Activated T-helper 1 cell treated with anti-CD3 and anti-CD28 coated beads, Interleukin-12 subunit alpha, Interleukin-12 subunit beta, Interleukin-2, Interleukin-4 antibody, amounts not matched to agents 30 ng/mL and 10 ng/mL and 1 ng/mL, durations not matched to agents 14 hours and 24 hours and 36 hours (primary cell): ENCODE measurements at regions of chr9 and their contacts with region 1.

Region 1: GRCh38 chr9:135907431-135908092 is at the start of gene CAMSAP1:
- DNase-seq: peak; percentile 91
- H3K4me3 Mint-ChIP-seq: peak within 1 kb of the TSS; percentile 90
- H3K27ac Mint-ChIP-seq: peak within 1 kb of the TSS; percentile 89
- H3K4me1 Mint-ChIP-seq: peaks cover 50% of the 10 kb centered on the region
- H3K27me3 Mint-ChIP-seq: no peaks in the 10 kb centered on the region
- total RNA-seq, gene CAMSAP1: 43.3 and 43.8 TPM in 2 replicates

Region 2: GRCh38 chr9:135440620-135441019 is 466.9 kb before region 1 on chr9:
- intact Hi-C with region 1: no loop called
- DNase-seq: no peak
- H3K4me3 Mint-ChIP-seq: no peak overlapping the region
- H3K27ac Mint-ChIP-seq: no peak overlapping the region
- H3K4me1 Mint-ChIP-seq: peaks cover 7% of the 10 kb centered on the region
- H3K27me3 Mint-ChIP-seq: peaks cover 5% of the 10 kb centered on the region

Region 3: DNA sequence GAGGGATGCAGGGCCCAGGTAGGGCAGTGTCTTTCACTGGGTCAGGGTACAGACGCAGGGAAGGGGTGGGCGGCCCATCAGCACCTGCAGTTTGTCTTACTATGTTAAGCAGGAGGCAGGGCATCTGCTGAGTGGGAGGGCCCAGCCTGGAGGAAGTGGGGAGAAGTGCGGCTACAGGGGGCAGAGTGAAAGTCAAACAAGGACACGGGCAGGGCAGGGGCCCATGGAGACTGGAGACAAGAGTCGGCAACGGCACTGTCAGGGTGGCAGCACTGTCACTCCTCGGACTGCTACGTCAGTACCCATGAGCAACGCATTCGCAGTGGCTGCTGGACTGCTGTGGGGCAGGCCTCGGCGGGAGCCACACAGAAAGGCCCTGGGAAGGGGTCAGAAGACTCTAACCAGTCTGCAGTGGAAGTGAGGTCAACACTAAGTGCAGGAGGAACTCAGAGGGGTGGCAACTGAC is 19.9 kb before region 1 on chr9:
- intact Hi-C with region 1: loop called (anchors 1 kb)
- DNase-seq: peak; percentile 40
- H3K4me3 Mint-ChIP-seq: peak overlapping the region; percentile 50
- H3K27ac Mint-ChIP-seq: peak overlapping the region; percentile 65
- H3K4me1 Mint-ChIP-seq: peaks cover 47% of the 10 kb centered on the region
- H3K27me3 Mint-ChIP-seq: peaks cover 3% of the 10 kb centered on the region

Region 4: DNA sequence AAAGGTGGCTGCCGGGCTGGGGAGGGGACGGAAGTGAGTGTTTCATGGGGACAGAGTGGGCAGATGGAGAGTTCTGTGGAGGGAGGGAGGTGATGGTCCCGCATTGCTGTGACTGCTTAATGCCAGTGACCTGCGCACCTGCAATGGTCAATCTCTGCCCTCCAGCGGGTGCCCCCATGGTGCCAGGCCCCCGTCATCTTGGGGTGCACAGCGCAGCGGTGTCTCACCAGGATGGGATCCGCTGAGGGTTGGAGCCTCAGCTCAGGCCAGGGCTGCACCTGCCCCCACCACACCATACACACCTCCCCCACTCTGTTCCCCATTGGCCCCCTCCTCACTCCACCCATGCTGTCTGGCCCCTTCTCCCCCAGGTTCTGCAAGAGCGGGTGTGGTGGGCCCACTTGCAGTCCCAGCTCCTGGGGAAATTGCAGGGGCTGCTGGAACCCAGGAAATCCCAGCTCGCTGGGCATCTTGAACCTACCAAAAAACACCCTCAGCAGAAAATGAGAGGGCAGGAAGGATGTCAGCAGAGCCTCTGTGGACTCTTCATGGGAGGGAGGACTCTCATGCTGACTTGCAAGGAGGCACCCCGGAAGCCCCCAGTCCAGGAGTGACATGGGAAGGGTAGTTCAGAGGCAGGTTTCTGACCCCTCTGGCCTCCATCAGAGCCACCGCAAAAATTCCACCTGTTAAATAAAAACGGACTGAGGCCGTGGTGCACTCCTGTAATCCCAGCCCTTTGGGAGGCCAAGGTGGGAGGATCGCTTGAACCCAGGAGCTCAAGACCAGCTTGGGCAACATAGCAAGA is 12.0 kb after region 1 on chr9:
- intact Hi-C with region 1: no loop called
- DNase-seq: no peak
- H3K4me3 Mint-ChIP-seq: no peak overlapping the region
- H3K27ac Mint-ChIP-seq: peak overlapping the region; percentile 35
- H3K4me1 Mint-ChIP-seq: peaks cover 6% of the 10 kb centered on the region
- H3K27me3 Mint-ChIP-seq: no peaks in the 10 kb centered on the region

Region 5: GRCh38 chr9:135961277-135961705 is 53.7 kb after region 1 on chr9 and contains the start of gene UBAC1:
- intact Hi-C with region 1: loop called (anchors 1 kb)
- DNase-seq: peak; percentile 93
- H3K4me3 Mint-ChIP-seq: peak within 1 kb of the TSS; percentile 87
- H3K27ac Mint-ChIP-seq: peak within 1 kb of the TSS; percentile 82
- H3K4me1 Mint-ChIP-seq: peaks cover 25% of the 10 kb centered on the region
- H3K27me3 Mint-ChIP-seq: peaks cover 8% of the 10 kb centered on the region
- total RNA-seq, gene UBAC1: 41.9 and 42.0 TPM in 2 replicates

Region 6: DNA sequence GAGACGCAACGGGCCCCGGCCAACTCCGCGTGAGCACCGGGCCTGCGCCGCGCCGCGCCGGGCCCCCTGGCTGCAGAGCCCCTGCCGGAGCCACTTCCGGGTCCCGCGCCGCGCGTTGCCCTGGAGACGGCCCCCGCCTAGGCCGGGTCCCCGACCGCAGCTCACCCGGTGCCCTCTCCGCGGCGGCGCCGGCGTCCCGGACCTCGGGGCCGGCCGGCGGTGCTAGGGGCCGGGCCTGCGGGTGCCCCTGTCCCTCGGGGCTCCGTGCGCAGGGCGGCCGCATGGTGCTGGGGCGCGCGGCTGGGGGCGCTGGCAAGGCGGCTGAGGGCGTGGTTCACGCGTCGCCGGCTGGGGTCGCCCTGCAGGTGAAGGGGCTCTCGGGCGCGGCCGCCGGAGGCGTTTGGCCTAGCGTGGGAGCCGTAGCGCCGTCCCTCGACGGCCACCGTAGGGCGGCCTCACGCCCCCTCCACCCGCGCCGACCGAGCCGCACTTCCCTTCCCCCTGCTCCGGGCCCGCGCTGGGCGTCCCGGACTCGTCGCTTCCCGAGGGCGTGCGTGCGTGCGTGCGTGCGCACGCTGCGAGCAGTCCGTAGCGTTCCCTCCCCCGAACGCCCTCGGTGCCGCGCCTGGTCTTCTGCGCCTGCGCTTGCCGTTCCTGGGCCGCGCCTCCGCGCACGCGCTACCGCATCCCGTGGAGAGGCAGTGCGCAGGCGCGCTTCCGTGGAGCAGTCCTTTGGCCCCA is 210.9 kb after region 1 on chr9 and contains the start of gene TMEM250:
- intact Hi-C with region 1: loop called (anchors 2 kb)
- DNase-seq: peak; percentile 96
- H3K4me3 Mint-ChIP-seq: peak within 1 kb of the TSS; percentile 82
- H3K27ac Mint-ChIP-seq: peak within 1 kb of the TSS; percentile 76
- H3K4me1 Mint-ChIP-seq: peaks cover 11% of the 10 kb centered on the region
- H3K27me3 Mint-ChIP-seq: no peaks in the 10 kb centered on the region
- total RNA-seq, gene TMEM250: 50.1 and 51.5 TPM in 2 replicates

Region 7: DNA sequence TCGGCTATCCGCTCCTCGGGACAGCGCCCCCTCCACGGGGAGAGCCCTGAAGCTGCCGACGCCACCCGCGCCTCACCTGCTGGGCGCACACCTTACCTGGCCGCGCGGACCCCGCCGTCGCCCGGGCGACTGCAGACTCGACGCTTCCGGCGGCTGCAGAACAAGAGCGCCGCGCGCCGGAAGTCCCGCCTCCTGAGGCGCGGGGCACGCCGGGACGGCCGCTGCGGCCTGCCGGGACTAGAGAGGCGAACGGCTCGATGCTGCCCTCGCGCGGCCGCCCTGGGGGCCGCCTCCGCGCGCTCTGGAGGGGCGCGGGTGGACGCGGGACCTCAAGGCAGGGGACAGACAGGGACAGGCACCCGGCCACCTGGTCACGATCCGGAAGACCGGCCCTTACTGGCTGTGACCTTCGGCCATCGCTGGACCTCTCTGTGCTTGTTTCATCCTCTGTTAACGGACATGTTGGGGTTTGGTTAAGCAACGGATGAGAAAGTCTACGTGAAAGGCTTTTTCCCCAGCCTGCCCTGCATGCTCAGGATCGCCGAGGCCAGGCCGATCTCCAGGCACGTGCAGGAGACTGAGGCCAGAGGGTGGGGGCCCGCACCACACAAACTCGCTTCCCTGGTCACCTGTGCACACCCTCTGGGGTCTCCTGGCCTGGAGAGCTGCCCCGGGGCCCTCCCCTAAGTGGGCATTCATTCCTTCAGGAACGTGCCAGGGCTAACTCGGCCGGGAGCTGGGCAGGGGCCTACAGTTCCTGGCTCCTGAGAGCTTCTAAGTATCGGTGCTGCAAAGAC is 492.7 kb after region 1 on chr9 and contains the start of gene SNAPC4:
- intact Hi-C with region 1: loop called (anchors 5 kb)
- DNase-seq: peak; percentile 86
- H3K4me3 Mint-ChIP-seq: peak within 1 kb of the TSS; percentile 91
- H3K27ac Mint-ChIP-seq: peak within 1 kb of the TSS; percentile 76
- H3K4me1 Mint-ChIP-seq: peaks cover 40% of the 10 kb centered on the region
- H3K27me3 Mint-ChIP-seq: no peaks in the 10 kb centered on the region
- total RNA-seq, gene SNAPC4: 26.7 TPM in 2 replicates